ENCODE measurements at regions of chr21 and their contacts with region 1.

Region 1: GRCh38 chr21:33127154-33127893 is 57.4 kb downstream of the OLIG1 start:
- DNase-seq: peak; percentile 62 to 80 (median 74)
- ATAC-seq: peak; percentile 95
- H3K4me3 ChIP-seq: no peak overlapping the region
- H3K27ac ChIP-seq: no peak overlapping the region
- H3K4me1 ChIP-seq: no peaks in the 10 kb centered on the region
- H3K27me3 ChIP-seq: peaks cover 25 to 45% of the 10 kb centered on the region in 2 experiments; a peak in 4 of 5 replicates
- CTCF ChIP-seq: peak; percentile 92 to 96 (median 96)
- EP300 ChIP-seq: no peak
- POLR2A ChIP-seq: no peak
- RAD21 ChIP-seq: peak; percentile 86 to 92

Region 2: DNA sequence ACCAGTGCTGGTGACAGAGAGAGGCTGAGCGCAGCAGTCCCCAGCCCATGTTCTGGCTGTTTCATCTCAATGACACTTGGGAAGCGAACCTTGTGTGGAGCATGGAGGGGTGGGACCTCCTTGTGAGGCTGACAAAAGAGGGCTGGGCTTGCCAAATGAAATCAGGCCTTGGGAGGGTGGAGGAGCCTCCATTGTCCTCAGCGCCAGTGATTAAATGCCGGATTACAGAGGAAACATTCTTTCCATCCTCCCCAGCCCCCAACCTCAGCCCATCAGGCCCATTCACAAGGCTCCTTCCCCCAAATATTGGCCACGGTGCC is 292.4 kb before region 1 on chr21:
- CTCF ChIA-PET with region 1: no interaction called
- POLR2A ChIA-PET with region 1: no interaction called
- in situ Hi-C with region 1: no loop called
- intact Hi-C with region 1: loop called (anchors 5 kb)
- DNase-seq: no peak
- ATAC-seq: no peak
- H3K4me3 ChIP-seq: no peak overlapping the region
- H3K27ac ChIP-seq: no peak overlapping the region
- H3K4me1 ChIP-seq: peaks cover 0 to 3% of the 10 kb centered on the region in 2 experiments; a peak in 1 of 5 replicates
- H3K27me3 ChIP-seq: peaks cover 12 to 15% of the 10 kb centered on the region in 2 experiments
- CTCF ChIP-seq: no peak
- EP300 ChIP-seq: no peak
- POLR2A ChIP-seq: no peak
- RAD21 ChIP-seq: no peak

Region 3: DNA sequence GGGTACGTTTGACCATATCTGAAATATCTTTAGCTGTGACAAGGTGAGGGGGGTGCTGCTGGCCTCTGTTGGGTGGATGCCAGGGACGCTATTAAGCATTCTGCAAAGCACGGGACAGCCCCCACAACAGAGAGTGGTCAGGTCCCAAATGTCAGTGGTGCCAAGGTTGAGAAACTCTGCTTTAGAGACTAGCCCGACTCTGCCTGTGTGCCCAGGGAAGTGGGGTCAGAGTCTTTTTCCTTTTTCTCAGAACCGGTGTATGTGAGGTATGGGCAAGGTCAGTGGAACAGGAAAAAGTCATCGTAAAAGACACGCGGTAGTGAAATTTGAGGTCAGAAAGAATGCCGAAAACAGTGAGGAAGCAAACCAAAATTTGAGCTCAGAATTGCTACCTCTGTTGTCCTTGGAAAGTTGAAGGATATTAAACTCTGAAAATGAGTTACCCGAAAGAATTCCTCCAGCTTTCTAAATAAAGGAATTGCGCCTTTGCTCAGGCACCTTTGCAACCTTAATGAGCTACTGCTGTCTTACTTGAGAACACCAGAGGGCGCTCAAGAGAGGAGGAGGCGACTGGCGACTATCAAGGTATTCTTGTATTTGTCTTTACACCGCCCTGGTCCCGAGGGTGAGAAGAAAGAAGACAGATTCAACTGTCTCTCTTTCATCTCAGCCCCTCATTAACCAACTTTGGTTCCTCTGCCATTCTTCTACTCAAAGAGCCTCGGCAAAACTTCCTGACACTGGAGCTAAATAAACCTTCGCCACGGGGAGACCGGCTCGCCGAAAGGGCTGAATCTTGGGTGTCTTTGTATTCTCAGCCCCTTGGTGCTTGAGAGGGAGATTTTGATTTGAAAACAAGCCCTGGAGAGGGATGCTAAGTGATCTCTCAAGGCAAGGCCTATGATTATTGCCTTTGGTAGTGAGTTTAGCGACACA is 187.0 kb before region 1 on chr21:
- CTCF ChIA-PET with region 1: no interaction called
- POLR2A ChIA-PET with region 1: no interaction called
- in situ Hi-C with region 1: no loop called
- intact Hi-C with region 1: loop called (anchors 1 kb)
- DNase-seq: peak; percentile 62 to 75 (median 74)
- ATAC-seq: peak; percentile 92
- H3K4me3 ChIP-seq: no peak overlapping the region
- H3K27ac ChIP-seq: no peak overlapping the region
- H3K4me1 ChIP-seq: no peaks in the 10 kb centered on the region
- H3K27me3 ChIP-seq: peaks cover 18 to 27% of the 10 kb centered on the region in 2 experiments; a peak in 4 of 5 replicates
- CTCF ChIP-seq: peak; percentile 82 to 85 (median 84)
- EP300 ChIP-seq: no peak
- POLR2A ChIP-seq: no peak
- RAD21 ChIP-seq: peak; percentile 36 to 81; a peak in 3 of 4 replicates

Region 4: GRCh38 chr21:32994305-32994704 is 133.0 kb before region 1 on chr21:
- CTCF ChIA-PET with region 1: interaction called, 6 read pairs
- POLR2A ChIA-PET with region 1: no interaction called
- in situ Hi-C with region 1: no loop called
- intact Hi-C with region 1: loop called (anchors 1 kb)
- DNase-seq: peak; percentile 20 to 25 (median 24)
- ATAC-seq: peak; percentile 36; the same call in 1 of the 3 replicates
- H3K4me3 ChIP-seq: no peak overlapping the region
- H3K27ac ChIP-seq: no peak overlapping the region
- H3K4me1 ChIP-seq: no peaks in the 10 kb centered on the region
- H3K27me3 ChIP-seq: peaks cover 3 to 7% of the 10 kb centered on the region in 2 experiments; a peak in 2 of 5 replicates
- CTCF ChIP-seq: peak; percentile 35 to 66 (median 40); a peak in 3 of 6 replicates
- EP300 ChIP-seq: no peak
- POLR2A ChIP-seq: no peak
- RAD21 ChIP-seq: peak; percentile 44 to 67

Measured in K562 (cell line).